MCF 10A (cell line): ENCODE measurements at regions of chr3 and their contacts with region 1.

Region 1: GRCh38 chr3:81338676-81339555 is 422.5 kb downstream of the GBE1 start:
- DNase-seq: peak; percentile 37
- H3K4me3 Mint-ChIP-seq: no peak overlapping the region
- H3K27ac Mint-ChIP-seq: no peak overlapping the region
- H3K4me1 Mint-ChIP-seq: no peaks in the 10 kb centered on the region
- H3K27me3 Mint-ChIP-seq: peaks cover 29% of the 10 kb centered on the region
- CTCF ChIP-seq: peak; percentile 40

Region 2: GRCh38 chr3:81218023-81218422 is 120.9 kb before region 1 on chr3:
- CTCF ChIA-PET with region 1: no interaction called
- POLR2A ChIA-PET with region 1: no interaction called
- intact Hi-C with region 1: loop called (anchors 1 kb)
- DNase-seq: peak; percentile 34
- H3K4me3 Mint-ChIP-seq: no peak overlapping the region
- H3K27ac Mint-ChIP-seq: no peak overlapping the region
- H3K4me1 Mint-ChIP-seq: no peaks in the 10 kb centered on the region
- H3K27me3 Mint-ChIP-seq: peaks cover 97% of the 10 kb centered on the region
- CTCF ChIP-seq: peak; percentile 20

Region 3: GRCh38 chr3:81302045-81302444 is 36.9 kb before region 1 on chr3:
- CTCF ChIA-PET with region 1: interaction called, 36 read pairs
- POLR2A ChIA-PET with region 1: no interaction called
- intact Hi-C with region 1: loop called (anchors 1 kb)
- DNase-seq: peak; percentile 61
- H3K4me3 Mint-ChIP-seq: no peak overlapping the region
- H3K27ac Mint-ChIP-seq: no peak overlapping the region
- H3K4me1 Mint-ChIP-seq: no peaks in the 10 kb centered on the region
- H3K27me3 Mint-ChIP-seq: peaks cover 32% of the 10 kb centered on the region
- CTCF ChIP-seq: peak; percentile 52